Esophagus muscularis mucosa (tissue), 4 donors: ENCODE measurements at regions of chr16 and their contacts with region 1.

Region 1: DNA sequence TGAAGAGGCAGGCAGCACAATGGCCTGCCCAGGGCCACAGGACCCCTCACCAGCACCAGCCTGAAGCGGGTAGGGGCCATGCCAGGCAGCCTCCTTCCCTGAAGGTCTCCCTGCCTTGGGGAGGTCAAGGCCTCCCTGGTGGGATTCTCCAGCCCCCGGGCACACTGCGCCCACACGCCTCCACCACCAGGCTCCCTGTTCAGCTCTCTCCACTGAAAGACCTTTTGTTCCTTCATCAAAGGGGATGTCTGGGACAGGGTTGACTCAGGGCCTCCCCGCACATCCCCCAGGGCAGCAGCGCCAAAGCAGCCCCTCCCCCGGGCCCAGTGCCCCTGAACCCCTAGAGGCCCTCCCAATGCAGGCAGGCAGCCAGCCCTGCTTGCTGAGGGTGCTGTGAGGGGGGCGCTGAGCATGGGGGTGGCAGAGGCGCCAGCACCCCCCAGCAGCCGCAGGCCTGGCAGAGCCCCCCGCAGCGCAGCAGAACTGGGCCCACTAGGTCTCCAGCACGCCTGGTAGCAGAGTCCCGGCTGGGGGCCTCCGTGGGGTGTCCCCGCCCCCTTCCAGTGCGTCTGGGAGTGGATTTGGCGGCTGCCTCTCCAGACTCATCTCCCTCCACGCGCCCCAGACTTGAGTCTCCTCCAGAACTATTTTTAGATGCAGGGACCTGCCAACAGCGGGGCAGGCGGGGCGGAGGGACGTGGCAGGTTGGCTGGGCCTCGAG is 13.1 kb downstream of the BCAR1 start:
- DNase-seq: peak; percentile 93
- H3K4me3 ChIP-seq: peak overlapping the region; percentile 13 to 43 (median 21)
- H3K27ac ChIP-seq: peak overlapping the region; percentile 82 to 85 (median 84)
- H3K4me1 ChIP-seq: peaks cover 55 to 71% (median 63%) of the 10 kb centered on the region in 4 donors
- H3K27me3 ChIP-seq: no peaks in the 10 kb centered on the region
- CTCF ChIP-seq: peak in 1 of 3 experiments; percentile 17
- EP300 ChIP-seq: no peak
- POLR2A ChIP-seq: no peak

Region 2: DNA sequence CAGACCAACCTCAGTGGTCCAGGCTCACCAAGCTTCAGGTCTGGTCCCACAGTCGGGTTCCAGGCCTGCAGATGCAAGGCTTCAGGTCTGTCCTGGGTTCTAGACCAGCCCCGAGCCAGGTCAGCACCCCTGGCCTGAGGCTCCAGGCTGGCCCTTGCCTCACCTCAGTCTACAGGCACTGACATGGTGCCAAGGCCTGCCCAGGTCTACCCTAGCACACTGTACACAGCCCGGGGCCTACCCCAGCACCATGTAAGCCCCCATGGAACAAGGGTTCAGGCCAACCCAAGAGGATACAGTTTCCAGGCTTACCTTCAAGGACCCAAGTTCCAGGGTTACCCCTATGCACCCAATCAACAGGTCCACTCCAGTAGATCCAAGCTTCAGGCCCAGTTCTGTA is 63.2 kb before region 1 on chr16:
- intact Hi-C with region 1: no loop called
- DNase-seq: no peak
- H3K4me3 ChIP-seq: no peak overlapping the region
- H3K27ac ChIP-seq: no peak overlapping the region
- H3K4me1 ChIP-seq: no peaks in the 10 kb centered on the region
- H3K27me3 ChIP-seq: no peaks in the 10 kb centered on the region
- CTCF ChIP-seq: no peak
- EP300 ChIP-seq: no peak
- POLR2A ChIP-seq: no peak

Region 3: DNA sequence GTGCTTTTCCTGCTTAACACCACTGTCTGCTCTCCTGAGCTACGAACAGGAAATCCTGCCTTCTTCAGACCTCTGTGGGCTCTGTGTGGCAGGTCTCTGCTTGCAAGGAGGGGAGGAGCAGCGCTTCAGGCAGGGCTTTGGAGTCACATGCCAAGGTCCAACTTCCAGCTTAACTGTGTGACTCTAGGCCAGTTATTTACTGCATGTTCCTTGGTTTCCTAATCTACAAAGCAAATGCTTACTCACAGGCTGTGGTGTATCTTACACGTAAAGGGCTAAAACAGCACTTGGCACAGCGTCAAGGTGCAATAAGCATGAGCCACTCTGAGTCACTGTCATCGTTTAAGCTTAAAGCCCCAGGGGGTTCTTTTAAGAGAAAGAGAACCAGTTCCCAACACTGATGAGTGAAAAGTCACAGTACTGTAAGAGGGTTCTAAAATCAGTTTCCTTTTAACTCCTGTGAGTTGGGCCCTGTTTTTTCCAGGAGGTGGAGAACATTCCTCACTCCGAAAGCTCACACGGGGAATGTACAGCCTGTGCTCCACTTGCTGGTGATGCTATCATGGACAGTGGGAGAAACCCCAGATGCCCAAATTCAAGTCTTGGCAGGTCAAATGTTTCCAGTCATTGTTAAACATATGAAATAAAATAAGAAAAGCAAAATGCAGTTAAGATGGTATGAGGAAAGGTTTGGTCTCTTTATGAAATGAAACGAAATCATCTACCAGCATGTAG is 67.2 kb after region 1 on chr16:
- intact Hi-C with region 1: loop called (anchors 5 kb)
- DNase-seq: no peak
- H3K4me3 ChIP-seq: no peak overlapping the region
- H3K27ac ChIP-seq: peak overlapping the region; percentile 69 to 78 (median 77)
- H3K4me1 ChIP-seq: peaks cover 26 to 30% (median 29%) of the 10 kb centered on the region in 4 donors
- H3K27me3 ChIP-seq: no peaks in the 10 kb centered on the region
- CTCF ChIP-seq: no peak
- EP300 ChIP-seq: no peak
- POLR2A ChIP-seq: no peak

Region 4: DNA sequence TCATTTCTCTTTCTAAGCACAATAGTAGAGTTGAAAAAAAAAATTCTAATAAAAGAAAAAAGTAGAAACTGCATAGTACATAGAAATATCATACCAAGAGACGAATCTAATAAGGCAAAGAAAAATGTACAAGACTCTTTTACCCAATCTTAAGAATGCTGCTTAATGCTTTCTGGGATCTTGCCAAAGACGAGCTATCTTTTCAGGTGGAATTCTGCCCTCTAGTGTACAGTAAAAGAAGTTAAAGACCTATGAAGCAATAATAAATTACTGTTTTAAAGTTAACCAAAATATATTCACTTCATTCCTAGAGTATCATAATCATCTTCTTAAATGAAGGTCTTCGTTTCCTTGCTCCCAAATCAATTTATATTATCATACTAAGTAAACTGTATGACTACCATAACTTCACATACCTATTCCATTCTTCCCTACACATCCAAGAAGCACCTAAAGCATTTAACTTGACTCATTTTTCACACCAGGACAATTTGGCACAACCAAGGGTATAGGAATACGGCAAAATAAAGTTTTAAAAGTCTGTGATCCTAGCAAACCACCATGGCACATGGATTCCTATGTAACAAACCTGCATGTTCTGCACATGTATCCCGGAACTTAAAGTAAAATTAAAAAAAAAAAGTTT is 147.3 kb after region 1 on chr16:
- intact Hi-C with region 1: loop called (anchors 2 kb)
- DNase-seq: no peak
- H3K4me3 ChIP-seq: no peak overlapping the region
- H3K27ac ChIP-seq: no peak overlapping the region
- H3K4me1 ChIP-seq: peaks cover 16 to 33% (median 26%) of the 10 kb centered on the region in 4 donors
- H3K27me3 ChIP-seq: no peaks in the 10 kb centered on the region
- CTCF ChIP-seq: peak; percentile 73 to 79 (median 79)
- EP300 ChIP-seq: no peak
- POLR2A ChIP-seq: no peak

Region 5: DNA sequence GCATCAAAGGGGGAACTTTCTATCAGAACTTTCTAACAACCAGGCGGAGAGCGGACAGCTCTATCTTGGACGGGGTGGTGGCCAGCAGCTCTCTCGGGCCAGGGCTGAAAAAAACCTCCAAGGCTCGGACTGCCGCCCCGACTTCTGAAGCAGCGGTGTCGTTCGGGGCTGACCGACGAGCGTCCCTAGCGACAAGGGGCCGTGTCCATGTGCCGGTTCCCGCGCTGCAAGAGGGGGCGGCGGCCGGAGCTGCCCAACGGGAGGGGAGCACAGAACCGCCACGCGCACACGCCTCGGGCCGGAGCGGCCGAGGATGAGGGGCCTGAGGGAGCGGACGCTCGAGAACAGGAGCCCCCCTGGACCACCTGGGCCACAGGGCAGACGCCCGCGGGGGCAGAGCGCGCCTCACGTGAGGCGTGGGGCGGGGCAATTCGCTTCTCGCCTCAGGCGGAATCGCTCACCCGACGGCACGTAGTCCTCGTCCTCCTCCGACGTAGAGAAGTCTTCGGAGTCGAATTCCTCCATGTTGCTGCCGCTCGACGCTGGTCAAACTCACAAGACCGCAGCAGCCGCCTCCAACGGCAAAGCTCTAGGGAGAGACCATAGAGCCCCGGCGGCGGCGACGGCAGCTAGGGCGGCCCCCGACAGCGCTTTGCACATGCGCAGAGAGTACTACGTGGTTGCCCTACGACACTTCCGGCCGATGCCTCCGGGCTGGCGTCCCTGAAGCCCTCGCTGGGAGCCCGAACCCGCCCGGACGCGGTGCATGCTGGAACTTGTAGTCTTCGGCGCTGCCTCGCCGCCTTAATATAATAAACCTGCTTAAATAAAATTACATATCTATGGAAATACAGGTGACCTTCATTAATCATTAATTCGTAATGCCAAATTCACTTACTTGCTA is 194.8 kb after region 1 on chr16 and contains the start of gene CFDP1:
- intact Hi-C with region 1: no loop called
- DNase-seq: peak; percentile 98
- H3K4me3 ChIP-seq: peak within 1 kb of the TSS; percentile 70 to 97 (median 76)
- H3K27ac ChIP-seq: peak within 1 kb of the TSS; percentile 93 to 94 (median 94)
- H3K4me1 ChIP-seq: peaks cover 15 to 39% (median 24%) of the 10 kb centered on the region in 4 donors
- H3K27me3 ChIP-seq: no peaks in the 10 kb centered on the region
- CTCF ChIP-seq: peak in 1 of 3 experiments; percentile 20
- EP300 ChIP-seq: no peak
- POLR2A ChIP-seq: peak; percentile 63
- total RNA-seq, gene CFDP1: 42.4 to 49.5 (median 44.0) TPM